ENCODE measurements at regions of chr14 and their contacts with region 1.

Region 1: DNA sequence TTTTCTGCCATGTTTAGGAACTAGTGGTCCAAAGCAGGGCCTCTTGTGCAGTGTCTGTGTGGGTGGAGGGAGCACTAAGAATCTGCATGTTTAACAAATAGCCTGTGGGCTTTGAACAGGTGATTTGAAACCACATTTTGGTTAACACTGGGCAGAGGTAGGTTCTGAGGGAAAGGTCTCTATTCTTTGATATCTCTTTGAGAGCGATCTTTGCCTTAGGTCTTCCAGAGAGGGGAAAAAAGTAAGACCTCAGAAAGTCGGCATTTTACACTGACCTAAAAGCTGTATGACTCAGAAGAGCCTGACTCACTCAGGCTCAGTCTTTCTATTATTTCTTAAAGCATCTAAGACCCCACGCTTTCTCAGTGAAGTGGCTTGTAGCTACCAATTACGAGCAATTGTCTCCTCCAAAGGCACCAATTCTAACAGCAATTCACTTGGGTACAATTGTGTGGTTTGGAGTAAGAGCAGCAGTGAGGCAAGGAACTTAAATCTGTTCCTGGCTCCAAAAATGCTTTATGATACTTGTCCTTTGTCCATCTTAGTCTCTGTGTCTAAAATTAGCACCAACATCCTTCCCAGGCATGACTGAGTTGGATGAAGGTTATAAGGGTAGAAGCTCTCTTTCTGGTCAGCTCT is 8.8 kb downstream of the EIF2B2 start:
- DNase-seq: no peak
- H3K4me3 Mint-ChIP-seq: no peak overlapping the region
- H3K27ac Mint-ChIP-seq: peak overlapping the region; percentile 46
- H3K4me1 Mint-ChIP-seq: peaks cover 29% of the 10 kb centered on the region
- H3K27me3 Mint-ChIP-seq: no peaks in the 10 kb centered on the region

Region 2: DNA sequence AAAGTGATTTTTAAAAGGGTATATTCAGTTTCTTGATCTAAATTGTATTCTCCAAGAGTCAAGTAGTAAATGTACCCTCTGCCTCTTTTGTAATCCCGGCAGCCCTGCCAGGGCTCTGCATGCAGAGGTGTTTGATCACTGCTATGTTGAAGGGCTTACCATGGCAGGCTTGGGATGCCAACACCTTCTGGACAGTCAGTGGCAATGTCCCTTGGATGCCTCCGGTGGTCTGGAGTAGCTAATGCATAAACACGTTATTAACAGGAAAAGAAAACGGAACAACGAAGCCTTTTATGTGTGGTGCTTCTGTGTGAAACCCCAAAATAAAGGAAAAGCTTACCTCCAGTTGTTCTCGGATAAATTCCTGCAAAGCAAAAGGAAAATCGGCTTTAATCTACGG is 11.2 kb after region 1 on chr14:
- CTCF ChIA-PET with region 1: interaction called, 10 read pairs
- POLR2A ChIA-PET with region 1: no interaction called
- DNase-seq: no peak
- H3K4me3 Mint-ChIP-seq: no peak overlapping the region
- H3K27ac Mint-ChIP-seq: no peak overlapping the region
- H3K4me1 Mint-ChIP-seq: no peaks in the 10 kb centered on the region
- H3K27me3 Mint-ChIP-seq: no peaks in the 10 kb centered on the region

Region 3: GRCh38 chr14:75188520-75189268 is 177.2 kb after region 1 on chr14:
- CTCF ChIA-PET with region 1: no interaction called
- POLR2A ChIA-PET with region 1: no interaction called
- DNase-seq: no peak
- H3K4me3 Mint-ChIP-seq: no peak overlapping the region
- H3K27ac Mint-ChIP-seq: no peak overlapping the region
- H3K4me1 Mint-ChIP-seq: peaks cover 3% of the 10 kb centered on the region
- H3K27me3 Mint-ChIP-seq: peaks cover 6% of the 10 kb centered on the region